HCT116 (cell line): ENCODE measurements at regions of chr5 and their contacts with region 1.

Region 1: DNA sequence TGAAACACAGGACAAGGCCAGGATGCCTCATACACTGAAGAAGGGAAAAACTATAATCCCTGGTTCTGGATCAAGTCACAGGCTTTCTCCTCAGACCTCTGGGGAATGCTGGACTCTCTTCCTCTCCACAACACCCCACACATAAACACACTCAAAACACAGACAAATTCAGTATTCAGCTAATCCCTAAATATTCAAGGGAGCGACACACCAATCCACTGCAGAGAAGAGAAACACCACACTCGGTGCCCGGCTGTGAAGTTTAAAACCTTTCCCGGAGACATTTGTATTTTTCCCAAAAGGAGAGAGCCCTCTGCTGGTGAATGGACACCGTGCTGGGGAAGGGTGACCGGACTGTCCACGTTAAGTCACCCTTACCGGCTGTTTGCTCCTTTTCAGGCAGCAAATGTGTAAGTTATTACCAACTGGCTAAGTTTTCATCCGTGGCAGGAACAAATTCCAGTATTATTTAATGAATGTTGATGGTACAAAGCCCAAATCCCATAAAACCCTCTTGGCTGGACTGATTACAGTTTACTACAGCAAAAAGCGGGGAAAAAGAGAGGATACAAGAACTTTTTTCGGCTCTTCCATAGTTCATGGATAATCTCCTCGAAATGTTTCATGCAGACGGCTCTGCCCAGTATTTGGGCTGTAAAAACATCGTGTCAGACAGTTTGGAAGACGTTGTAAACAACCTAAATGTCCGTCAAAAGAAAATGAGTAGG is 130.9 kb upstream of the SLC30A5 start:
- DNase-seq: peak; percentile 53
- ATAC-seq: peak; percentile 96
- H3K4me3 ChIP-seq: no peak overlapping the region
- H3K27ac ChIP-seq: no peak overlapping the region
- H3K4me1 ChIP-seq: peaks cover 0 to 8% of the 10 kb centered on the region in 2 experiments; a peak in 2 of 4 replicates
- H3K27me3 ChIP-seq: no peaks in the 10 kb centered on the region
- CTCF ChIP-seq: peak; percentile 75 to 90 (median 89); a peak in 5 of 6 replicates
- POLR2A ChIP-seq: no peak
- RAD21 ChIP-seq: peak; percentile 85

Region 2: DNA sequence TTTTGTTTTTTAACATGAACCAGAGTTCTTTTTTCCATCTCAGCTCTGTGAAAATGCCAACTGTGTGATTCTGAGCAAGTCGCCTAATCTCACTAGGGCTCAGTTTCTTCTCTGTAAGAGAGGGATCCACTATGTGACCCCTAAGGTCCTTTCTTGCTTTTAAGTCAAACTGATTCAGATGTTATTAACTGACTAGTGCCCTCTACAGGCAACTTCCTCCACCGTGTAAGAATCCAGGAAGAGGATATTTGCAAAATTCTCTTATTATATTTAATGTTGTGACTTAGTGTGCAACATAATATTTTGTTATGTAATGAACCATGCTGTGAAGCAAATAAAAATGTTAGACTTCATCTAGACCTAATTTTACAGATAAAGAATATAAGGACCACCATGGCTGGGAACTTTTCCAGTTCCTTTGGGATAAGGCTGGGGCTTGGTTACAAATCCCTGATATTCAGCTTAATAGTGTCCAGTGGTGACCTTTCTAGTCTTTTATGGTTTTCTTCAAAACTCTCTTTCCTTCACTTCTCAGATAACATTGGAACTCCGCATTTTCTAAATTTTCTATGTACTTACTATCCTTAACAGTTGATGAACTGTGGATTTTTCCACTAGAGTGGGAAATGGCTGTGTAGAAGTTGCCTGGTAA is 502.6 kb before region 1 on chr5:
- CTCF ChIA-PET with region 1: no interaction called
- POLR2A ChIA-PET with region 1: no interaction called
- RAD21 ChIA-PET with region 1: no interaction called
- intact Hi-C with region 1: loop called (anchors 5 kb)
- DNase-seq: peak; percentile 60
- ATAC-seq: peak; percentile 82
- H3K4me3 ChIP-seq: no peak overlapping the region
- H3K27ac ChIP-seq: no peak overlapping the region
- H3K4me1 ChIP-seq: peaks cover 3 to 23% of the 10 kb centered on the region in 2 experiments; a peak in 2 of 4 replicates
- H3K27me3 ChIP-seq: no peaks in the 10 kb centered on the region
- CTCF ChIP-seq: peak; percentile 67 to 78 (median 67); a peak in 5 of 6 replicates
- POLR2A ChIP-seq: no peak
- RAD21 ChIP-seq: peak; percentile 83

Region 3: GRCh38 chr5:68683632-68684036 is 279.3 kb before region 1 on chr5:
- CTCF ChIA-PET with region 1: no interaction called
- POLR2A ChIA-PET with region 1: no interaction called
- RAD21 ChIA-PET with region 1: no interaction called
- intact Hi-C with region 1: loop called (anchors 10 kb)
- DNase-seq: peak; percentile 80
- ATAC-seq: peak; percentile 95
- H3K4me3 ChIP-seq: no peak overlapping the region
- H3K27ac ChIP-seq: no peak overlapping the region
- H3K4me1 ChIP-seq: peaks cover 5 to 23% of the 10 kb centered on the region in 2 experiments; a peak in 3 of 4 replicates
- H3K27me3 ChIP-seq: no peaks in the 10 kb centered on the region
- CTCF ChIP-seq: no peak
- POLR2A ChIP-seq: no peak
- RAD21 ChIP-seq: 0 out of 2 replicates have a peak, but pooled peaks have one; percentile 12